ENCODE measurements at regions of chr1 and their contacts with region 1.

Region 1: GRCh38 chr1:201888282-201889089 is at the start of gene SHISA4:
- DNase-seq: peak; percentile 77 to 96
- H3K4me3 ChIP-seq: peak within 1 kb of the TSS; percentile 58 to 81
- H3K27ac ChIP-seq: peak within 1 kb of the TSS; percentile 87 to 94
- H3K4me1 ChIP-seq: peaks cover 30 to 52% of the 10 kb centered on the region in 2 donors
- H3K27me3 ChIP-seq: no peaks in the 10 kb centered on the region
- CTCF ChIP-seq: no peak
- total RNA-seq, gene SHISA4: 62.5 TPM

Region 2: DNA sequence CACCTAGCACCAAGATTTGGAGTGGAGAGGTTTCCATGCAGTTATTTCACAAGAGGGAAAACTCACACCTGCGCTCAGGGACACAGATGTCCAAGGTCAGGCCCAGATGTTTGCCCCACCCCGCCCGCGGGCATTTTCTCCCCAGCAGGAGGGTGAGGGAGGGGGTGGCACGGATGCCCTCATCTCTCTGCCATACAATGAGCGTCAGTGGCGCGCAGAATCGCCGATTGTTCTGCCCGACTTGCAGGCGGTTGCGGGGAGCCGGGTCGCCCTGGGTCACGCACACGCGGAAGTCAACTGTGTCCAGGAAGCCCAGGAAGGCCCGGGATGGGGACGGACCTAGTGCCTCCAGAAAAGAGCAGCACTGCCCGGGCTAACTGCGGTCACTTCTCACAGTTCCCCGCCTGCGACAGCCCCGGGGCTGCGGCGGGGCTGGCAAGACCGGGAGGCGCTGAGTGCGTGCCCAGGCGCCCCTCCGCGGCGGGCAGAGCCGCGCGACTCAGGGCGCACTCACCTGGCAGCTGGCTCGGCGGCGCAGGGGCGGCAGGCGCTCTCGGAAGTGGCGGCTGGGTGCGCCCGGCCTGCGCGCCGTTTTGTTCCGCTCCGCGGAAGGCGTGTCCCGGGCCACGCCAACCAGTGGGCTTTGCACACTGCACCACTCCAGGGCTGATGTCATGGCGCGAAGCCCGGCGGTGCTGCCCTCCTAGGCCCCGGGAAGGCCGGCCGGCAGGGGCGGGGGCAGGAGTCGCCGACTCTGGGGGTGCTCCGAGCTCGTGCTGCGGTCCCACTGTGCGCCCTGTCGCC is 381.7 kb before region 1 on chr1 and contains the start of gene CSRP1:
- intact Hi-C with region 1: no loop called
- DNase-seq: peak; percentile 53 to 95
- H3K4me3 ChIP-seq: peak within 1 kb of the TSS; percentile 71 to 97
- H3K27ac ChIP-seq: peak within 1 kb of the TSS; percentile 93 to 99
- H3K4me1 ChIP-seq: peaks cover 11 to 33% of the 10 kb centered on the region in 2 donors
- H3K27me3 ChIP-seq: no peaks in the 10 kb centered on the region
- CTCF ChIP-seq: no peak
- total RNA-seq, gene CSRP1: 948 TPM

Region 3: DNA sequence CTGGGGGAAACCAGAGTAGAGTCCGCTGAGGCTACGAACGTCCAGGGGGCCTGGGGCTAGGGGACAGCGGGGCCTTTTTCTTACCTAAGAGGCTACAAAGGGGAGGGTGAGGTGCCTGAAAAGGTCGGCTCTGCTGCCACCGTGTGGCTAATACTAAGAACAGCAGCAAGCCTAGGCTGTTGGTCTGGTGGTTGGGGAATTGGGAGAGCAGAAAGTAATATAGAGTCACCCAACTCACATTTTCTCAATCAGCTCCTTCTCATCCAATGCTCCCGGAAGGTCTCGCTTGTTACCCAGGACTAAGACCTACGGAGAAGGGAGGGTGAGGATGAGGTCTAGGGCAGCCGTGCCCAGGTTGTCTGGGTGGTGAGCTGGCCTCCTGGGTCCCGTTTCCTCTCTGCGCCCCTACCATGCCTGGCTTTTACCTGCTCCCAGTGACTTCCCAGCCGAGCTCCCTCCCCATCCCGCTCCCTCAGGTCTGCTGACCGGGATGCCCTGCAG is 246.8 kb after region 1 on chr1:
- intact Hi-C with region 1: loop called (anchors 10 kb)
- DNase-seq: peak in 1 of 2 donors; percentile 75
- H3K4me3 ChIP-seq: no peak overlapping the region
- H3K27ac ChIP-seq: peak overlapping the region; percentile 39 to 69
- H3K4me1 ChIP-seq: peaks cover 11 to 24% of the 10 kb centered on the region in 2 donors
- H3K27me3 ChIP-seq: no peaks in the 10 kb centered on the region
- CTCF ChIP-seq: peak; percentile 71 to 92 (median 91)